ENCODE measurements at regions of chr9 and their contacts with region 1.

Region 1: GRCh38 chr9:120562861-120563443 is 17.0 kb downstream of the CDK5RAP2 start:
- DNase-seq: no peak
- H3K4me3 ChIP-seq: no peak overlapping the region
- H3K4me3 Mint-ChIP-seq: no peak overlapping the region
- H3K27ac Mint-ChIP-seq: no peak overlapping the region
- H3K4me1 ChIP-seq: no peaks in the 10 kb centered on the region
- H3K4me1 Mint-ChIP-seq: no peaks in the 10 kb centered on the region
- H3K27me3 ChIP-seq: no peaks in the 10 kb centered on the region
- H3K27me3 Mint-ChIP-seq: no peaks in the 10 kb centered on the region
- CTCF ChIP-seq: no peak

Region 2: DNA sequence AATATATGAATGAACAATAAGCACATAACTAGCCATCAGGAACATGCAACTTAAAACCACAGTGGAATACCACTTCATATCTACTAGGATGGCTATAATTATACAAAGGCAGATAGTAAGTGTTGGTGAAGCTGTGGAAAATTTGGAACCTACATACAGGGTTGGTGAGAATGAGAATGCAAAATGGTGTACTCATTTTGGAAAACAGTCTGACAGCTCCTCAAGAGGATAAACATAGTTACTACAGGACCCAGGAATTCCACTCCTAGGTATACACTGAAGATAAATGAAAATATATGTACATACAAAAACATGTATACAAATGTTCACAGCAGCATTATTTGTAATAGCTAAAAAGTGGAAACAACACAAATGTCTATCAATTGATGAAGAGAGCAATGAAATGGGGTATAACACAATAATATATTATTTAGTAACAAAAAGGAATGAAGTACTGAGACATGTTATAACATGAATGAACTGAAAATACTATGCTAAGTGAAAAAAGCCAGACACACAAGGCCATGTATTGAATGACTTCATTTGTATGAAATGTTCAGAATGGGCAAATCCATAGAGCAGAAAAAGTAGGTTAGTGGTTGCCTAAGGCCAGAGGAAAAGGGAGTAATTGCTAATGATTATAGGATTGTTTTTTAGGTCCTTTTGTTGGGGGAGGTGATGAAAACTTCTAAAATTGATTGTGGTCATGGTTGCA is 48.2 kb after region 1 on chr9:
- CTCF ChIA-PET with region 1: interaction called, 10 read pairs
- POLR2A ChIA-PET with region 1: no interaction called
- intact Hi-C with region 1: no loop called
- DNase-seq: peak in 1 of 2 experiments; percentile 10
- H3K4me3 ChIP-seq: no peak overlapping the region
- H3K4me3 Mint-ChIP-seq: no peak overlapping the region
- H3K27ac Mint-ChIP-seq: no peak overlapping the region
- H3K4me1 ChIP-seq: no peaks in the 10 kb centered on the region
- H3K4me1 Mint-ChIP-seq: no peaks in the 10 kb centered on the region
- H3K27me3 ChIP-seq: no peaks in the 10 kb centered on the region
- H3K27me3 Mint-ChIP-seq: no peaks in the 10 kb centered on the region
- CTCF ChIP-seq: peak; percentile 21 to 28